ENCODE measurements at regions of chrX and their contacts with region 1.

Region 1: GRCh38 chrX:15073313-15073712 is 196.6 kb downstream of the ASB9 start:
- DNase-seq: no peak
- H3K4me3 ChIP-seq: no peak overlapping the region
- H3K27ac ChIP-seq: no peak overlapping the region
- H3K4me1 ChIP-seq: no peaks in the 10 kb centered on the region
- H3K27me3 ChIP-seq: no peaks in the 10 kb centered on the region
- CTCF ChIP-seq: no peak

Region 2: GRCh38 chrX:15160558-15161095 is 87.3 kb after region 1 on chrX:
- CTCF ChIA-PET with region 1: no interaction called
- POLR2A ChIA-PET with region 1: no interaction called
- intact Hi-C with region 1: loop called (anchors 5 kb)
- DNase-seq: no peak
- H3K4me3 ChIP-seq: no peak overlapping the region
- H3K27ac ChIP-seq: no peak overlapping the region
- H3K4me1 ChIP-seq: no peaks in the 10 kb centered on the region
- H3K27me3 ChIP-seq: peaks cover 3% of the 10 kb centered on the region
- CTCF ChIP-seq: no peak

Region 3: DNA sequence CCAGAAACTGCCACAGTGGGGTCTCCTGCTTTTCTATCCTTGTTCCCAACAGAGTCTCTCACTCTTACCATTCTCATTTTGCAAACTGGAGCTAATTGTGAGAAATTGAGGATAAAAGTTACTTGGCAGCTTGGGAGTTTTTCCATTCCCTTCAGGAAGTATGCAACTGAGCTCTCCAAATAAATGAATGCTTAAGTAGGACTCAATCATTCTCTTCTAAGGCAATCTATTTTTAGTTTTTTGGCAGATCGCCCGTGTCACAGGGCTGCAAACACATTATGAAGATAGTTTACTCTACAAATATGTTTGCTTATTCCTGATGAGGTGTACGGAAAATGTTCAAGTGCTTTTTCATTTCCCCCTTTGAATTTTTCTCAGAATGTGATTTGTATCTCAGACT is 236.8 kb after region 1 on chrX:
- CTCF ChIA-PET with region 1: no interaction called
- POLR2A ChIA-PET with region 1: no interaction called
- intact Hi-C with region 1: no loop called
- DNase-seq: peak; percentile 89
- H3K4me3 ChIP-seq: no peak overlapping the region
- H3K27ac ChIP-seq: peak overlapping the region; percentile 57
- H3K4me1 ChIP-seq: peaks cover 25% of the 10 kb centered on the region
- H3K27me3 ChIP-seq: no peaks in the 10 kb centered on the region
- CTCF ChIP-seq: no peak